GM10248 (cell line): ENCODE measurements at regions of chr7 and their contacts with region 1.

Region 1: DNA sequence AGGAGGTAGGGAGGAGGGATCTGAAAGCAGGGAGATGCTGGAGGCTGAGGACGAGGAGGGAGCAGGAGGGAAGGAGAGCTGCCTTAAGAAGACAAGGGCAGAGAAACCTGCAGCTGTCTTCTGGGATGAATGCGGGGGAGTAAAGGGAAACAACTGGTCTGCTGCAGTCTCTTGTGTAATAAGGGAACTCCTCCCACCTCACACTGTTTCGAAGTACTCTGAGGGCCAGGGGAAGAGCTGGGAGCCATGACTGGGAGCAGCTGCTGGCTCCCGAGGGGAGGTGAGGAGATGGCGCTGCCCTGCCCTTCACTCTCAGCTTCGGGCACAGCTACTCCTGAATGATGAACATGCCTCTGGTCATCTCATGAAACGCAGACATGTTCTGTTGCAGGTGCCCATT is 65.1 kb downstream of the CLEC2L start:
- DNase-seq: no peak
- CTCF ChIP-seq: no peak

Region 2: DNA sequence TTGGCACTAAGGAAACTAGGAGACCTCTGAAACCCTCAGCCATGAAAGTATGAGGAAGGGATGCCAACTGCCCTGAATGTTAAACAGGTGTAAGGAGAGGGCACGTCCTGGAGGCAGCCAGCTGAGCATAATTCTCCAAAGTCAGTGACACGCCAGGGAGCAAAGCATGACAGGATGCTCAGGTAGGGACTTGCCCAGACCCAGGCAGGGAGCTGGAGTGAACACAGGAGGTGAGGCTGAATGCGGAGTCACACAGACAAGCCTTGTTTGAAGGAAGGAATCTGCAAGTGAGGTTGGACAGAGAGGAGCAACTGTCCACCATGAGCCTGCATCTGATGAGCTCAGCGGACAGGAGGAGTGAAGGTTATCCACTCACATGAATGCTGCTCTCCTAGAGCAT is 146.7 kb before region 1 on chr7:
- CTCF ChIA-PET with region 1: no interaction called
- POLR2A ChIA-PET with region 1: no interaction called
- DNase-seq: no peak
- CTCF ChIP-seq: no peak

Region 3: DNA sequence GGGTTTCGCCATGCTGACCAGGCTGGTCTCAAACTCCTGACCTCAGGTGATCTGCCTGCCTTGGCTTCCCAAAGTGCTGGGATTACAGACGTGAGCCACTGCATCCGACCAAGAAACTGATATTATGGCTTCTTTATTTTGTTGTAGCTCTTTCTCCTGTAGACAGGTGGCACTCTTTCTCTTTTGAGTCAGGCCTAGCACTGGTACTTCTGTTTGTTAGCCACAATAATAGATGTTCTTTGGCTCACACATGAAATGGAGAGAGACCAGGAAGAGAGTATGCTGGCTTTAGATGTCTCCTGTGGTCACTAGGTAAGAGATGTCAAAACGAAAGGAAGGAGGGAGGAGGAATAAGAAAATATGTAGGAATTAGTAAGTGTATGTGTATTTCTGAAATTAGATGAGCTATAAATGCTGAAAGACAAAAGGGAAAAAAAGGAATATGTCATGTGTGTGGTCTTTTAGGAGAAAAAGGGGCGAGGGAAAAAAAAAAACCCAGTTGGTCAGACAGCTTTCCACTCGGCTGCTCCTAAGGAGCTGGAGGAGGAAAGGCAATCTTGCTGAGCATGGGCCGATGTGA is 13.6 kb after region 1 on chr7:
- CTCF ChIA-PET with region 1: interaction called, 42 read pairs
- POLR2A ChIA-PET with region 1: no interaction called
- DNase-seq: peak; percentile 41
- CTCF ChIP-seq: peak; percentile 47